PC-9 (cell line): ENCODE measurements at regions of chr19 and their contacts with region 1.

Region 1: DNA sequence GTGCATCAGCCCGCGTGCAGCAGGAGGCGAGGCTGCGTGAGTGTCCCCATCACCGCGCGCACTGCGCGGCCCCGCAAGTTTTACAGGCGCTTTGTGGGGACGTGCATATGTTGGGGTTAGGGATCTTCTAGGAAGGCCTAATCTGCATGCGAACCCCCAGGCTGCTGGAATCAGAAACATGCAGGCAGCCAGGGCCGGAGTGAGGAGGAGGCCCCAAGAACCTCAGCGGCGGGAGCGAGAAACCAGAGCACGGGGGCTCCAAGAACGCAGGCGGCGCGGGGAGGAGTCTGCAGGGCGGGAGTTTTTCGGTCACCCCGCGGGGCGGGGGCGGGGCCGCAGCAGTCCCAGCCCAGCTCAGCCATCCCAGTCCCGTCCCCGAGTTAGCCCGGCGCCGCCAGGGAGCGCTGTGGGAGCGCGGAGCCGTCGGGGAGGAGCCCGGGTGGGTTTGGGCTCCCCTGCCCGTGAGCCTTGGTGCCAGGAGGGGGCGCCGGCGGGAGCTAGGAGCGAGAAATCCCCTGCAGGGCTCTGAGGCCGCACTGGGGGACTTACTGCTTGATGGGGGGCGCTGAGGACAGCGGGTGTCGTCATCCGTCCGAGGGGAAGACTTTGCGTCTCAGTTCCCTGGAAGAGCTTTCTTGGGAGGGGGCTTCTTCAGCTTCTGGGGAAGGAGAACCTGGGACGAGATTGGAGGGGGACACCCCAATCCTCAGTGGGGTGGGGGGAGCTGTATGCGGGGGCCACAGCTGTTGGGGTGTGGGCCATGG is 933 bp upstream of the NRTN start:
- DNase-seq: peak; percentile 68 to 92
- H3K4me3 ChIP-seq: peak overlapping the region; percentile 37; the same call in 1 of the 2 replicates
- H3K27ac ChIP-seq: no peak overlapping the region
- H3K4me1 ChIP-seq: no peaks in the 10 kb centered on the region
- H3K27me3 ChIP-seq: 0 out of 2 replicates have a peak, but pooled peaks cover 8% of the 10 kb centered on the region
- CTCF ChIP-seq: peak; percentile 83

Region 2: GRCh38 chr19:5790573-5791520 is 13.1 kb before region 1 on chr19 and contains the start of gene DUS3L:
- CTCF ChIA-PET with region 1: interaction called, 14 read pairs
- POLR2A ChIA-PET with region 1: interaction called, 3 read pairs
- intact Hi-C with region 1: no loop called
- DNase-seq: peak; percentile 87 to 90
- H3K4me3 ChIP-seq: peak within 1 kb of the TSS; percentile 86
- H3K27ac ChIP-seq: peak within 1 kb of the TSS; percentile 85
- H3K4me1 ChIP-seq: no peaks in the 10 kb centered on the region
- H3K27me3 ChIP-seq: no peaks in the 10 kb centered on the region
- CTCF ChIP-seq: no peak
- total RNA-seq, gene DUS3L: 27.1 and 29.2 TPM in 2 replicates

Region 3: DNA sequence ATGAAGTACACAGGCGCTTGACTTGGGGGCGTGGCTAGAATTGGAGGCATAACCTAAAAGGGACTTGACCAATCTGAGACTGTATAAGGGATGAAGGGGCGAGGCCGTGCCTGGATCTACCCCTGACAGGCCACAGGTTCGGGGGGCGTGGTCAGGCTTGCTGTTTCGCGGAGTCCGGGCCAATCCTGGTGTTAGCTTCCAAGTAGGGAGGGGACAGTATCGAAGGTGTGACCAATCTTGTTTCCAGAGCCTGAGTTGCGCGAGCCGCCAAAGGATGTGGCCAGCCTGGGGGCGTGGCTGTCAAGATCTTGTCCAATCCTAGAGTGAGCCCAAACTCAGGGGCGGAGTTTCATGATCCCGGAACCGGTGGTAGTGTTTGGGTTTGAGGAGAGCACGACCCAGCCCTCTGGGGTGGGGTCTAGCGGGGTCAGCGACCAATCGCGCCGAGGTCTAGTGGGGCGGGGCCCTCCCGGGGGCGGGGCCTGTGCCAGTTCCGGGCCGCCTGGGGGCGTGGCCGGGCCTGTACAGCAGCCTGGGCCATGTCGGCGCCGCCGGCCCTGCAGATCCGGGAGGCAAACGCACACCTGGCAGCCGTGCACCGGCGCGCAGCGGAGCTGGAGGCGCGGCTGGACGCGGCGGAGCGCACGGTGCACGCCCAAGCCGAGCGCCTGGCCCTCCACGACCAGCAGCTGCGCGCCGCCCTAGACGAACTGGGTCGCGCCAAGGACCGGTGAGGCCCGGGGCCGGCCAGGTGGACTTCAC is 100.6 kb after region 1 on chr19 and contains the start of gene VMAC:
- CTCF ChIA-PET with region 1: interaction called, 13 read pairs
- POLR2A ChIA-PET with region 1: no interaction called
- intact Hi-C with region 1: no loop called
- DNase-seq: peak; percentile 98 to 99
- H3K4me3 ChIP-seq: peak within 1 kb of the TSS; percentile 97
- H3K27ac ChIP-seq: peak within 1 kb of the TSS; percentile 89
- H3K4me1 ChIP-seq: peaks cover 7% of the 10 kb centered on the region; the same call in 1 of the 2 replicates
- H3K27me3 ChIP-seq: no peaks in the 10 kb centered on the region
- CTCF ChIP-seq: no peak
- total RNA-seq, gene VMAC: 6.2 and 7.1 TPM in 2 replicates

Region 4: GRCh38 chr19:6021878-6022569 is 218.1 kb after region 1 on chr19:
- CTCF ChIA-PET with region 1: interaction called, 8 read pairs
- POLR2A ChIA-PET with region 1: no interaction called
- intact Hi-C with region 1: loop called (anchors 10 kb)
- DNase-seq: peak in 1 of 2 experiments; percentile 40
- H3K4me3 ChIP-seq: no peak overlapping the region
- H3K27ac ChIP-seq: no peak overlapping the region
- H3K4me1 ChIP-seq: no peaks in the 10 kb centered on the region
- H3K27me3 ChIP-seq: no peaks in the 10 kb centered on the region
- CTCF ChIP-seq: peak; percentile 64